Activated naive CD4-positive, alpha-beta T cell treated with anti-CD3 and anti-CD28 coated beads, Interleukin-2, amount 10 ng/mL, durations not matched to agents 7 days and 5 days (primary cell): ENCODE measurements at regions of chr3 and their contacts with region 1.

Region 1: DNA sequence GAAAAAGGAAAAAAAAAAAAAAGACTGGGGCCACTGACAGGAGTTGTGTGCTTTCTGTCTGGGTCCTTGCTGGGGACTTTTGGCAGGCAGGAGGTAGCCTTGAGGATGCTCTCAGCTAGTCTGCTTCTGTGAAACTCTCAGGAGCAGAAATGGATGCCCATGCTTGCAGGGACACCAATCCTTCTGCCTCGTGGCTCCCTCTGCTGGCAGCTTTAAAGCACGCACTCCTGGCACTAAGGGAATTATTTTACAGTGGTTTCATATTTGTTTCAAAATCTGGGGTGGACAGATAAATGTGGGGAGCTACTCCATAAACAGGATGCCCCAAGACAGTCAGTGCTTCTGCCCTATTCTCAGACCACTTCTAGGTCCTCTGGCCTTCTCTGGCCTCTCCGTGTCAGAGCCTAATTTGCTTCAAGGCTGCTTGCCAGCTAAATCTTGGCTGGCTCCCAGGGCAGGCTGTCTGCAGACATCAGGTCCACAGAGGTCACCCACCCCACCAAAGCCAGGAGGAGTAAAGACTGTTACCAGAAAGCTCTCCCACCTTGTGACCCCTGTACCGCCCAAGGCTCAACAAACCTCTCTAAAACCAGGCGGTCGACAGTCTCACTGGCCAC is 17.1 kb downstream of the TRAIP start:
- DNase-seq: peak; percentile 90
- H3K4me3 Mint-ChIP-seq: no peak overlapping the region
- H3K27ac Mint-ChIP-seq: no peak overlapping the region
- H3K4me1 Mint-ChIP-seq: no peaks in the 10 kb centered on the region
- H3K27me3 Mint-ChIP-seq: no peaks in the 10 kb centered on the region

Region 2: GRCh38 chr3:49703443-49703927 is 135.8 kb before region 1 on chr3:
- CTCF ChIA-PET with region 1: interaction called, 30 read pairs
- DNase-seq: peak; percentile 81
- H3K4me3 Mint-ChIP-seq: no peak overlapping the region
- H3K27ac Mint-ChIP-seq: no peak overlapping the region
- H3K4me1 Mint-ChIP-seq: no peaks in the 10 kb centered on the region
- H3K27me3 Mint-ChIP-seq: no peaks in the 10 kb centered on the region

Region 3: GRCh38 chr3:49856181-49857005 is 17.1 kb after region 1 on chr3 and contains the start of gene TRAIP:
- CTCF ChIA-PET with region 1: interaction called, 24 read pairs
- DNase-seq: peak; percentile 97
- H3K4me3 Mint-ChIP-seq: peak within 1 kb of the TSS; percentile 96
- H3K27ac Mint-ChIP-seq: peak within 1 kb of the TSS; percentile 86
- H3K4me1 Mint-ChIP-seq: peaks cover 27% of the 10 kb centered on the region
- H3K27me3 Mint-ChIP-seq: peaks cover 11% of the 10 kb centered on the region